Right lobe of liver (tissue), 6 donors: ENCODE measurements at regions of chr1 and their contacts with region 1.

Region 1: DNA sequence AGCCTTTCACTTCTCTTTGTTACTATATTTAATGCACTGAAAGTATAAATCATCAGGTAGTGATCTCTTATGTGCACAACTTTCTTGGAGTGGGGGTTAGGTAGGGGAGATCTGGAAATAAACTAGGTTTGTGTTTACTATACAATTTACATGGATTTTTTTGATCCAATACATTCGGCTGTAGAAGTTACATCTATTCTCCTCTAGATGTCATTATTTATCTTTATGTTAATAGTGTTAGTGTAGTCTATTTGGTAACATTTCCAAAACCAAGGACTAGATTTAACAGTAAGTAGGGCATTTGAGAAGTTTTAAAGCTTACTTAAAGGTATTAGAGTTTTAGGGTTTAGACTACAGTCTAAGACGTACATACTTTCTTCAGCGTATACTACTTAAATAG is 5.4 kb downstream of the VPS45 start:
- DNase-seq: no peak
- ATAC-seq: peak; percentile 33 to 66 (median 41)
- H3K4me3 ChIP-seq: no peak overlapping the region
- H3K27ac ChIP-seq: no peak overlapping the region
- H3K4me1 ChIP-seq: peaks cover 0 to 7% (median 0%) of the 10 kb centered on the region in 4 donors
- H3K27me3 ChIP-seq: no peaks in the 10 kb centered on the region
- CTCF ChIP-seq: peak; percentile 36 to 42 (median 38)
- POLR2A ChIP-seq: no peak

Region 2: GRCh38 chr1:150162862-150163706 is 90.1 kb after region 1 on chr1:
- intact Hi-C with region 1: loop called (anchors 10 kb)
- DNase-seq: peak; percentile 60 to 72 (median 65)
- ATAC-seq: peak; percentile 64 to 75 (median 68)
- H3K4me3 ChIP-seq: no peak overlapping the region
- H3K27ac ChIP-seq: peak overlapping the region; percentile 59 to 67 (median 60)
- H3K4me1 ChIP-seq: no peaks in the 10 kb centered on the region
- H3K27me3 ChIP-seq: no peaks in the 10 kb centered on the region
- CTCF ChIP-seq: no peak
- POLR2A ChIP-seq: peak; percentile 55